ENCODE measurements at regions of chr4 and their contacts with region 1.

Region 1: DNA sequence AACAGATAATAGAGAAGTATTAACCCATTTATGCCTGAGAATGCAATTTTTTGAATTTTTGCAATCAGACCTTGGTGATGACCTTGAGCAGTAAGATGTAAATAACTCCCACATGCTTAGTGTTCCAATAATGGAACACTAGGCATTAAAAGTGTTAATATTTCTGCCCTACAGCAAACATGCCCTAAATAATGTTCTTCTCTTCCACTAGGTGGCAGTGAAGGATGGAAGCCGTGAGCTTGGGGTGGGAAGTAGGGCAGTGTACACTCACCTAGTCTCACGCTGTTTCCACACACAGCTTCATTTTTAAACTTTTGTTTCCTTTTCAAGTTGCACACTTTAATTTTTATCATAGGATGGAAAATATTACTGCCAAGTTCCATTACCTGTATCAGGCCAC is 613.1 kb upstream of the HS3ST1 start:
- DNase-seq: peak; percentile 6 to 35 (median 6)
- H3K4me3 ChIP-seq: no peak overlapping the region
- H3K4me3 Mint-ChIP-seq: no peak overlapping the region
- H3K27ac ChIP-seq: no peak overlapping the region
- H3K27ac Mint-ChIP-seq: no peak overlapping the region
- H3K4me1 ChIP-seq: no peaks in the 10 kb centered on the region
- H3K4me1 Mint-ChIP-seq: no peaks in the 10 kb centered on the region
- H3K27me3 ChIP-seq: no peaks in the 10 kb centered on the region
- H3K27me3 Mint-ChIP-seq: peaks cover 0 to 5% (median 0%) of the 10 kb centered on the region in 3 donors
- CTCF ChIP-seq: peak; percentile 66

Region 2: DNA sequence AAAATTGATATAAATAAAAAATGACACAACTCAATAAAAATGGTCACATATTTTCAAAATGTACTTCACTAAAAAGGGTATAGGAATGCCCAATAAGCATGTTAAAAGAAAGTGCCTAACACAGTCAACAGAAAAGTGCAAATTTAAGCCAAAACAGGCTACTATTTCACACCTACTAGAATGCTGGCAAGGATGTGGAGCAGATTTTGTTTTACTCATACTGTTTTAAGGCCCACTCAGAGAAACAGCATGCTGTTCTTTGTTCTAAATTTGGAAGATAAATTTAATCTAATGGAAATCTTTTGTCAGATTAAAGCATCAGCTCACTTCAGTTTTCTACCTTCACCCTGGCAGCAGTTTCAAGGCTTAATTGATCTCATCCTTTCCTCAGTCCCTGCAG is 36.4 kb before region 1 on chr4:
- intact Hi-C with region 1: no loop called
- DNase-seq: no peak
- H3K4me3 ChIP-seq: no peak overlapping the region
- H3K4me3 Mint-ChIP-seq: no peak overlapping the region
- H3K27ac ChIP-seq: no peak overlapping the region
- H3K27ac Mint-ChIP-seq: no peak overlapping the region
- H3K4me1 ChIP-seq: no peaks in the 10 kb centered on the region
- H3K4me1 Mint-ChIP-seq: no peaks in the 10 kb centered on the region
- H3K27me3 ChIP-seq: no peaks in the 10 kb centered on the region
- H3K27me3 Mint-ChIP-seq: peaks cover 0 to 1% (median 0%) of the 10 kb centered on the region in 3 donors
- CTCF ChIP-seq: no peak

Region 3: GRCh38 chr4:12146339-12146738 is 104.5 kb after region 1 on chr4:
- intact Hi-C with region 1: no loop called
- DNase-seq: no peak
- H3K4me3 ChIP-seq: no peak overlapping the region
- H3K4me3 Mint-ChIP-seq: no peak overlapping the region
- H3K27ac ChIP-seq: no peak overlapping the region
- H3K27ac Mint-ChIP-seq: no peak overlapping the region
- H3K4me1 ChIP-seq: no peaks in the 10 kb centered on the region
- H3K4me1 Mint-ChIP-seq: no peaks in the 10 kb centered on the region
- H3K27me3 ChIP-seq: no peaks in the 10 kb centered on the region
- H3K27me3 Mint-ChIP-seq: peaks cover 0 to 7% (median 2%) of the 10 kb centered on the region in 3 donors
- CTCF ChIP-seq: no peak

Region 4: GRCh38 chr4:12165616-12166015 is 123.8 kb after region 1 on chr4:
- intact Hi-C with region 1: loop called in 1 of 2 experiments (anchors 10 kb)
- DNase-seq: peak; percentile 35 to 64 (median 55)
- H3K4me3 ChIP-seq: no peak overlapping the region
- H3K4me3 Mint-ChIP-seq: no peak overlapping the region
- H3K27ac ChIP-seq: no peak overlapping the region
- H3K27ac Mint-ChIP-seq: no peak overlapping the region
- H3K4me1 ChIP-seq: no peaks in the 10 kb centered on the region
- H3K4me1 Mint-ChIP-seq: peaks cover 4% of the 10 kb centered on the region
- H3K27me3 ChIP-seq: no peaks in the 10 kb centered on the region
- H3K27me3 Mint-ChIP-seq: peaks cover 0 to 1% (median 0%) of the 10 kb centered on the region in 3 donors
- CTCF ChIP-seq: peak; percentile 34

Region 5: GRCh38 chr4:12633053-12633651 is 591.3 kb after region 1 on chr4:
- intact Hi-C with region 1: loop called in 1 of 2 experiments (anchors 10 kb)
- DNase-seq: peak; percentile 25 to 46 (median 42)
- H3K4me3 ChIP-seq: no peak overlapping the region
- H3K4me3 Mint-ChIP-seq: no peak overlapping the region
- H3K27ac ChIP-seq: no peak overlapping the region
- H3K27ac Mint-ChIP-seq: no peak overlapping the region
- H3K4me1 ChIP-seq: no peaks in the 10 kb centered on the region
- H3K4me1 Mint-ChIP-seq: no peaks in the 10 kb centered on the region
- H3K27me3 ChIP-seq: no peaks in the 10 kb centered on the region
- H3K27me3 Mint-ChIP-seq: peaks cover 1 to 3% (median 1%) of the 10 kb centered on the region in 3 donors
- CTCF ChIP-seq: peak; percentile 89